Heart left ventricle (tissue), 16 donors: ENCODE measurements at regions of chr10 and their contacts with region 1.

Region 1: GRCh38 chr10:91607646-91608403 is 25.0 kb downstream of the PPP1R3C start:
- DNase-seq: peak in 2 of 5 donors; percentile 35 to 59
- ATAC-seq: peak; percentile 73 to 85 (median 77)
- H3K4me3 ChIP-seq: no peak overlapping the region
- H3K27ac ChIP-seq: peak overlapping the region; percentile 84 to 97 (median 90)
- H3K4me1 ChIP-seq: peaks cover 4 to 69% (median 35%) of the 10 kb centered on the region in 12 donors
- H3K27me3 ChIP-seq: no peaks in the 10 kb centered on the region
- CTCF ChIP-seq: no peak
- POLR2A ChIP-seq: no peak

Region 2: GRCh38 chr10:91590142-91590903 is 17.5 kb before region 1 on chr10:
- intact Hi-C with region 1: loop called in 3 of 10 experiments (anchors 2 kb)
- DNase-seq: peak in 4 of 5 donors; percentile 61 to 78 (median 68)
- ATAC-seq: peak; percentile 4 to 52 (median 28)
- H3K4me3 ChIP-seq: no peak overlapping the region
- H3K27ac ChIP-seq: peak overlapping the region; percentile 63 to 96 (median 88)
- H3K4me1 ChIP-seq: peaks cover 6 to 80% (median 62%) of the 10 kb centered on the region in 12 donors
- H3K27me3 ChIP-seq: no peaks in the 10 kb centered on the region
- CTCF ChIP-seq: no peak
- POLR2A ChIP-seq: no peak

Region 3: DNA sequence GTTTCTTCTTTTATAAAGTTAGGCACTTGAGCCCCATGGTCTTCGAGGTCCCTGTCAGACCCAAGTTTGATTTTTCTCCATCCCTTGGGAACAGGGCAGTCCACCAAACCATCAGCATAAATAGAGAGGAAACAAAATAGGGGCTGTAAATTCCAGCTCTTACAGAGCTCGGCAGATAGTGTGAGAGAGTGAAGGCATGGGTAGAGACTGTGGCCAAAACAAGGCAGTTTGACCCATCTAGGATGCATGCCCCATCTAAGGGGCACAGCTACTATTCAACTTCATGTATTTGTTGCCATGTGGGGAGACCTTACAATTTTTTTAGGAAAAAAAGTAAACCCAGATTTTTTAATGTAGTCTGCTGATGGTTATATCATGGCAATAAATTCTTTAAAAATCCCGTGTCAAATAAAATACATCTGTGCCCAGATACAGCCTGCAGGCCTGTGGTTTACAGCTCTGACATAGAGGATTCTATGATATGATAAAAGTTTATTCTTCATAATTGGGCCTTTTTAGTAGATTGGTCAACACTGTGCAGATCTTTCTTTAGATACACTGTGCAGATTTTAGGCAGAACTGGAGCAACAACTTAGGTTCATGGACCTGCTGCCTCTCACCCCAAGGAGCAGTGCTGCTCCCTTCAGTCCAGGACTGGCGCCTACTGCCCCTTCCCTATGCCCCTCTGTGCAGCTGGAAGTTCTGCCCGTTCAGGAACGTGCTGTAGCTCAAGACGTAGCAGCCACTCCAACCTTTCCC is 19.7 kb after region 1 on chr10:
- intact Hi-C with region 1: loop called in 1 of 10 experiments (anchors 2 kb)
- DNase-seq: no peak
- ATAC-seq: peak in 3 of 4 donors; percentile 27 to 56 (median 44)
- H3K4me3 ChIP-seq: peak overlapping the region in 7 of 12 donors; percentile 63 to 78 (median 71)
- H3K27ac ChIP-seq: peak overlapping the region in 10 of 12 donors; percentile 31 to 89 (median 72)
- H3K4me1 ChIP-seq: peaks cover 0 to 40% (median under 1%) of the 10 kb centered on the region in 12 donors
- H3K27me3 ChIP-seq: peaks cover 0 to 5% (median 0%) of the 10 kb centered on the region in 9 donors
- CTCF ChIP-seq: peak in 2 of 12 donors; percentile 13 to 14
- POLR2A ChIP-seq: no peak